ENCODE measurements at regions of chr15 and their contacts with region 1.

Region 1: DNA sequence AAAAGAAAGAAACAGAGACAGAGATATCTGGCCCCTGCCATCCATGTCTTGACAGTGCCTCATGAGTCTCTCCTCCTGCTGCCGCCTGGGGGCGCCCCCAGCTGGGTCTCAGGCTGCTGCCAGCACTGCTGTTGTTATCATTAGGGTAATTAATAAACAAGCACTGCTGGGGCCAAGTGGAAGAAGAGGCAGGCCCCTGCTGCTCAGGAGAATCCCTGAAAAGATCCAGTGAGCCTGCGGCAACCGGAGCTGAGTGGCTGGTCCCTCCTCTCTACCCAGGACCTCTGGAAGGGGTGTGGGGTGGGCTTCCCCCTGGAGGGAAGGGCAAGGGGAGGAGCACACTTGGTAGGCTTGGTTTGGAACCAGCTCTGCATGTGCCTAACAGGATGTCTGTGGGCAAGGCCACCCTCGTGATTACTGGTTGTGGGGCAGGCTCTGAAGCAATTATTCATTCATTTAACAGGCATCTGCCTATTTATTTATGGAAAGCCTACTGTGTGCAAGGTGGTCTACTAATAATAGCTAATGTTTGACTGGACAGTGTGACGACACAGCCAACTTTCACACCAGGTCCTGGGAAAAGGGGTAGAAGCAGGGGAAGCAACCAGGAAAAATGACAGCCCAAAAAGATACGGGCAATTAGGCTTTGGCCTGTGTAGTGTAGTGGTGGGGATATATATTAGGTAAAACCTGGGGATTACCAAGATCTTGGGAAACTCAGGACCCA is 1.2 kb upstream of the TYRO3 start:
- DNase-seq: peak; percentile 70 to 87 (median 80)
- H3K4me3 ChIP-seq: peak overlapping the region in 1 of 4 donors; percentile 88
- H3K27ac ChIP-seq: peak overlapping the region in 3 of 5 donors; percentile 27 to 72 (median 39)
- H3K4me1 ChIP-seq: peaks cover 9 to 22% of the 10 kb centered on the region in 2 donors
- H3K27me3 ChIP-seq: no peaks in the 10 kb centered on the region
- CTCF ChIP-seq: peak; percentile 69 to 88 (median 80)
- POLR2A ChIP-seq: no peak

Region 2: GRCh38 chr15:41043276-41043951 is 514.4 kb before region 1 on chr15:
- intact Hi-C with region 1: no loop called
- DNase-seq: no peak
- H3K4me3 ChIP-seq: no peak overlapping the region
- H3K27ac ChIP-seq: peak overlapping the region in 1 of 5 donors; percentile 5
- H3K4me1 ChIP-seq: peaks cover 0 to 3% of the 10 kb centered on the region in 2 donors
- H3K27me3 ChIP-seq: no peaks in the 10 kb centered on the region
- CTCF ChIP-seq: no peak
- POLR2A ChIP-seq: no peak

Region 3: DNA sequence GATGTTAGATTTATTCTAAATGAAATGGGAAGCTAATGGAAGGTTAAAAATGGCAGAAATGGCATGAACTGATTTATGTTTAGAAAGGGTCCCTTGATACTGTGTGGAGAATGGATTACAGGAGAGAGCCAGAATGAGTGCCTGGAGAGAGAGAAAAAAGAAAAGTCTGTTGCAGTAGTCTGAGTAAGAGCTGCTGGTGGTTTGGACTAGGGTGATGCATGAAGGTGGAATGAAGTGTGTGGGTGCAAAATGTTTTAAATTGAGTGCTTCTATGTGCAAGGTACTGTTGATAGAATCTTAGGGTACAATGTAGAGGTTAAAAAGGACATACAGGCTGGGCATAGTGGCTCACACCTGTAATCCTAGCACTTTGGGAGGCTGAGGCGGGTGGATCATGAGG is 90.9 kb after region 1 on chr15:
- intact Hi-C with region 1: loop called in 1 of 2 experiments (anchors 10 kb)
- DNase-seq: no peak
- H3K4me3 ChIP-seq: no peak overlapping the region
- H3K27ac ChIP-seq: no peak overlapping the region
- H3K4me1 ChIP-seq: peaks cover 0 to 12% of the 10 kb centered on the region in 2 donors
- H3K27me3 ChIP-seq: no peaks in the 10 kb centered on the region
- CTCF ChIP-seq: no peak
- POLR2A ChIP-seq: no peak